T-cell (primary cell): ENCODE measurements at regions of chr1 and their contacts with region 1.

Region 1: DNA sequence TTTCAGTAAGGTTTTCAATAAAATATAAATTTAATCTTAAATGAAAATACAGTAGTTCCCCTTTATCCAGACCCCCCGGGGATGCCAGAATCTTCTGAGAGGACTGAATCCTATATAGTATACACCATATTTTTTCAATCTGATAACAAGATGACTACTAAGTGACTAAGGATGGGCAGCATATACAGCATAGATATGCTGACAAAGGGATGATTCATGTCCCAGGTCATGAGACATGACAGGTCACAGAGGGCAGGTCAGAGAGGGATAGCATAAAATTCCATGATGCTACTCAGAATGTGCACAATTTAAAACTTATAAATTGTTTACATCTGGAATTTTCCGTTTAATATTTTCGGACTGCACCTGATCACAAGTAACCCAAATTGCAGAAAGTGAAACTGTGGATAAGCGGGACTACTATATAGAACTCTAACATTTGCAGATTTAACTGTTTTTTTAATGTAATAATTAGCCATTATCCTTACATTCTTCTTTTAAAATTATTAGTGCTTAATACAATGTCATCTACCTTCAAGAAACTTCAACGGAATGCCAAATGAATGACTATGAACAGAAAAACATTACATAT is 48.8 kb downstream of the LRRC40 start:
- DNase-seq: no peak
- ATAC-seq: no peak
- H3K4me3 ChIP-seq: no peak overlapping the region
- H3K4me3 Mint-ChIP-seq: no peak overlapping the region
- H3K27ac ChIP-seq: no peak overlapping the region
- H3K27ac Mint-ChIP-seq: no peak overlapping the region
- H3K4me1 ChIP-seq: no peaks in the 10 kb centered on the region
- H3K4me1 Mint-ChIP-seq: no peaks in the 10 kb centered on the region
- H3K27me3 ChIP-seq: no peaks in the 10 kb centered on the region
- H3K27me3 Mint-ChIP-seq: no peaks in the 10 kb centered on the region

Region 2: GRCh38 chr1:70195342-70195741 is 38.7 kb after region 1 on chr1:
- CTCF ChIA-PET with region 1: no interaction called
- POLR2A ChIA-PET with region 1: interaction called, 8 to 17 read pairs
- DNase-seq: no peak
- ATAC-seq: no peak
- H3K4me3 ChIP-seq: no peak overlapping the region
- H3K4me3 Mint-ChIP-seq: no peak overlapping the region
- H3K27ac ChIP-seq: no peak overlapping the region
- H3K27ac Mint-ChIP-seq: no peak overlapping the region
- H3K4me1 ChIP-seq: no peaks in the 10 kb centered on the region
- H3K4me1 Mint-ChIP-seq: peaks cover 14 to 23% (median 21%) of the 10 kb centered on the region in 3 donors
- H3K27me3 ChIP-seq: no peaks in the 10 kb centered on the region
- H3K27me3 Mint-ChIP-seq: no peaks in the 10 kb centered on the region

Region 3: DNA sequence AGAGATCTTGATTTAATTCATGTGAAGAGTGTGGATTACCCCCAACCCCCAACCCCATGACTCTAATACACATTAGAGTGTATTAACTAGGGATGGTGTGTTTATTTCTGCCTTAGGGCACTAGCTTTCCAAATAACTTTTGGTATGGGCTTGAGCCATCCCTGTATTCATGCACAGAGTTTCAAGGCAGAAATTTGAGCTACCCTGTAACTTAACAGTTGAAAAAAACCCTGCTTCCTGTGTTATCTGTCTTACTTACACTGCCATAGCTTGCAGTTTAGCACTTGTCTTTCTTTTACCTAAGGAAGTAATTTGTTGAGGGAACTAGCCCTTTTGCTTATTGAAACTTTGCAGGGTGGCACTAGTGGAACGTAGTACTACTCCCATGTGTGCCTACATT is 70.8 kb after region 1 on chr1:
- CTCF ChIA-PET with region 1: interaction called in 1 of 2 experiments, 4 read pairs
- POLR2A ChIA-PET with region 1: interaction called in 1 of 2 experiments, 11 read pairs
- DNase-seq: peak in 1 of 35 experiments; percentile 17
- ATAC-seq: peak; percentile 31 to 71 (median 50)
- H3K4me3 ChIP-seq: no peak overlapping the region
- H3K4me3 Mint-ChIP-seq: peak overlapping the region in 1 of 3 donors; percentile 32
- H3K27ac ChIP-seq: no peak overlapping the region
- H3K27ac Mint-ChIP-seq: peak overlapping the region; percentile 57 to 71
- H3K4me1 ChIP-seq: peaks cover 2 to 23% of the 10 kb centered on the region in 2 experiments
- H3K4me1 Mint-ChIP-seq: peaks cover 61 to 65% (median 61%) of the 10 kb centered on the region in 3 donors
- H3K27me3 ChIP-seq: no peaks in the 10 kb centered on the region
- H3K27me3 Mint-ChIP-seq: no peaks in the 10 kb centered on the region

Region 4: DNA sequence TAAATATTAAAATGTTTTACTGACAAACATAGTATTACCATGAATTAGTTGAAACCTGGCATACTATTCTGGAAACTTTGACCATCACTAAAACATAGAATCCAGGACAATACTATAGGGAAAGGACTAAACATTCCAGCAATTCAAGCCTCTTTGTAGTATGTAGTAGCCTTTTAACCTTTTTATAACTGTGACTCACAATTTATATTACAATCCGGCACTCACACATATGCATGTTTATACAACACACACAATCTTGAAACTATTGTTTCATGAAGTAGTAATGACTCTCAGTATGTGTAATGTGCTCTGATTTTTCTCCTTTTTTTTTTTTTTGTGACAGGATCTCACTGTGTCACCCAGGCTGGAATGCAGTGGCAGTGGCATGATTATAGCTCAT is 133.6 kb after region 1 on chr1:
- CTCF ChIA-PET with region 1: no interaction called
- POLR2A ChIA-PET with region 1: no interaction called
- DNase-seq: no peak
- ATAC-seq: no peak
- H3K4me3 ChIP-seq: no peak overlapping the region
- H3K4me3 Mint-ChIP-seq: no peak overlapping the region
- H3K27ac ChIP-seq: no peak overlapping the region
- H3K27ac Mint-ChIP-seq: no peak overlapping the region
- H3K4me1 ChIP-seq: no peaks in the 10 kb centered on the region
- H3K4me1 Mint-ChIP-seq: peaks cover 0 to 5% (median 4%) of the 10 kb centered on the region in 3 donors
- H3K27me3 ChIP-seq: no peaks in the 10 kb centered on the region
- H3K27me3 Mint-ChIP-seq: no peaks in the 10 kb centered on the region